ENCODE measurements at regions of chr2 and their contacts with region 1.

Region 1: DNA sequence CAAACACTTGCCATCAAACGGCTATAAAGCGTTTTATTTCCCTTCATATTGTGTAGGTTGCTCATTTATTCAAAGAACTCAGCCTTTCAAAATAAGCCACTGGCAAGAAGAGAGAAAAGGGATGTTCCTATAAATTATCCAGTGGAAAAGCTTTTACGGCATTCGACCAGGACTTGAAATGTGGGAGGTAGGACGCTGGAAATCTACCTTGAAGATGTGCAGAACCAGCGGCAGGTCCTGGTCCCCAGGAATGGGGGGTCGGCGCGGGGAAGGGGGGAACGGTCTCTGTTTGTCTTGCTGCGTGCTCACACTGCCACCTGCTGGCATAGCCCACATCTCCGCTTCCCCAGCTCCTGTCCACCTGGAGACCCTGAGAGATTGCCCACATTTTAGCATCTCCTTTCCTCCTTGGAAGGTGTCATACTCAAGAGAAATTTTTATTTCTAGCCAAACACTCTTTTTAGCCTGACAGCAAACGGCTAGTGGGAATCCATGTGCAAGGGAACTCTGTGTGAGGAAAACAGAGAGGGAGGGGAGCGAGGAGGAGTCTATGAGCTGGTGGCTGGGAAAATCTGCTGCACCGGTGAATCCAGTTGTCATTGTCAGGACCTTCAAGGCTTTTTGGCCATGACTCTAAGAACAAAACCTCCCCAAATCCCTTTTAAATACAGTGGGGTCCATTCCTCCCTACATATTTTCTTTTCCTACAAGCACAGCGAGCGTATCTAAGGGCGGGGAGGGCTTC is 349.0 kb upstream of the PKDCC start:
- DNase-seq: no peak
- H3K4me3 ChIP-seq: no peak overlapping the region
- CTCF ChIP-seq: peak; percentile 94

Region 2: GRCh38 chr2:41414486-41415230 is 284.2 kb before region 1 on chr2:
- in situ Hi-C with region 1: loop called (anchors 10 kb)
- DNase-seq: peak; percentile 13
- H3K4me3 ChIP-seq: no peak overlapping the region
- CTCF ChIP-seq: peak; percentile 69

Region 3: GRCh38 chr2:41647468-41648050 is 51.3 kb before region 1 on chr2:
- in situ Hi-C with region 1: no loop called
- DNase-seq: no peak
- H3K4me3 ChIP-seq: no peak overlapping the region
- CTCF ChIP-seq: no peak

Measured in astrocyte of the cerebellum (primary cell).